ENCODE measurements at regions of chr9 and their contacts with region 1.

Region 1: GRCh38 chr9:73200694-73201452 is 49.2 kb downstream of the ANXA1 start:
- DNase-seq: no peak
- ATAC-seq: peak; percentile 82
- H3K4me3 ChIP-seq: no peak overlapping the region
- H3K27ac ChIP-seq: no peak overlapping the region
- H3K4me1 ChIP-seq: no peaks in the 10 kb centered on the region
- H3K27me3 ChIP-seq: no peaks in the 10 kb centered on the region
- CTCF ChIP-seq: peak in 2 of 3 experiments; percentile 43 to 58; a peak in 3 of 6 replicates
- EP300 ChIP-seq: no peak
- POLR2A ChIP-seq: no peak
- RAD21 ChIP-seq: peak; percentile 66

Region 2: GRCh38 chr9:73116031-73116430 is 84.8 kb before region 1 on chr9:
- CTCF ChIA-PET with region 1: interaction called, 25 read pairs
- POLR2A ChIA-PET with region 1: no interaction called
- RAD21 ChIA-PET with region 1: interaction called, 3 read pairs
- SMC1A ChIA-PET with region 1: interaction called, 3 read pairs
- in situ Hi-C with region 1: no loop called
- intact Hi-C with region 1: no loop called
- DNase-seq: no peak
- ATAC-seq: peak; percentile 48; the same call in 1 of the 3 replicates
- H3K4me3 ChIP-seq: no peak overlapping the region
- H3K27ac ChIP-seq: no peak overlapping the region
- H3K4me1 ChIP-seq: no peaks in the 10 kb centered on the region
- H3K27me3 ChIP-seq: no peaks in the 10 kb centered on the region
- CTCF ChIP-seq: no peak
- EP300 ChIP-seq: no peak
- POLR2A ChIP-seq: no peak
- RAD21 ChIP-seq: no peak

Region 3: GRCh38 chr9:73167614-73168013 is 33.3 kb before region 1 on chr9:
- CTCF ChIA-PET with region 1: no interaction called
- POLR2A ChIA-PET with region 1: no interaction called
- RAD21 ChIA-PET with region 1: no interaction called
- SMC1A ChIA-PET with region 1: no interaction called
- in situ Hi-C with region 1: no loop called
- intact Hi-C with region 1: no loop called
- DNase-seq: no peak
- ATAC-seq: peak; percentile 47; the same call in 2 of the 3 replicates
- H3K4me3 ChIP-seq: no peak overlapping the region
- H3K27ac ChIP-seq: no peak overlapping the region
- H3K4me1 ChIP-seq: no peaks in the 10 kb centered on the region
- H3K27me3 ChIP-seq: no peaks in the 10 kb centered on the region; a peak in 1 of 4 replicates
- CTCF ChIP-seq: no peak
- EP300 ChIP-seq: no peak
- POLR2A ChIP-seq: no peak
- RAD21 ChIP-seq: no peak

Region 4: GRCh38 chr9:73219985-73220626 is 19.2 kb after region 1 on chr9:
- CTCF ChIA-PET with region 1: interaction called, 70 read pairs
- POLR2A ChIA-PET with region 1: interaction called, 3 read pairs
- RAD21 ChIA-PET with region 1: interaction called, 24 read pairs
- SMC1A ChIA-PET with region 1: interaction called, 32 read pairs
- in situ Hi-C with region 1: no loop called
- intact Hi-C with region 1: no loop called
- DNase-seq: peak; percentile 40
- ATAC-seq: peak; percentile 87
- H3K4me3 ChIP-seq: no peak overlapping the region
- H3K27ac ChIP-seq: no peak overlapping the region
- H3K4me1 ChIP-seq: no peaks in the 10 kb centered on the region
- H3K27me3 ChIP-seq: no peaks in the 10 kb centered on the region
- CTCF ChIP-seq: no peak
- EP300 ChIP-seq: no peak
- POLR2A ChIP-seq: no peak
- RAD21 ChIP-seq: no peak

Region 5: GRCh38 chr9:73269430-73270101 is 68.7 kb after region 1 on chr9:
- CTCF ChIA-PET with region 1: interaction called, 28 read pairs
- POLR2A ChIA-PET with region 1: no interaction called
- RAD21 ChIA-PET with region 1: interaction called, 17 read pairs
- SMC1A ChIA-PET with region 1: interaction called, 21 read pairs
- in situ Hi-C with region 1: no loop called
- intact Hi-C with region 1: no loop called
- DNase-seq: no peak
- ATAC-seq: peak; percentile 48
- H3K4me3 ChIP-seq: no peak overlapping the region
- H3K27ac ChIP-seq: no peak overlapping the region
- H3K4me1 ChIP-seq: no peaks in the 10 kb centered on the region
- H3K27me3 ChIP-seq: no peaks in the 10 kb centered on the region
- CTCF ChIP-seq: peak in 2 of 3 experiments; percentile 9 to 35; a peak in 2 of 6 replicates
- EP300 ChIP-seq: no peak
- POLR2A ChIP-seq: no peak
- RAD21 ChIP-seq: peak; percentile 13; the same call in 1 of the 2 replicates

Region 6: GRCh38 chr9:73357607-73358006 is 156.7 kb after region 1 on chr9:
- CTCF ChIA-PET with region 1: no interaction called
- POLR2A ChIA-PET with region 1: no interaction called
- RAD21 ChIA-PET with region 1: no interaction called
- SMC1A ChIA-PET with region 1: no interaction called
- in situ Hi-C with region 1: no loop called
- intact Hi-C with region 1: no loop called
- DNase-seq: no peak
- ATAC-seq: no peak
- H3K4me3 ChIP-seq: no peak overlapping the region
- H3K27ac ChIP-seq: no peak overlapping the region
- H3K4me1 ChIP-seq: no peaks in the 10 kb centered on the region
- H3K27me3 ChIP-seq: no peaks in the 10 kb centered on the region
- CTCF ChIP-seq: no peak
- EP300 ChIP-seq: no peak
- POLR2A ChIP-seq: no peak
- RAD21 ChIP-seq: no peak

Region 7: GRCh38 chr9:73667717-73668116 is 466.8 kb after region 1 on chr9:
- CTCF ChIA-PET with region 1: no interaction called
- POLR2A ChIA-PET with region 1: no interaction called
- RAD21 ChIA-PET with region 1: no interaction called
- SMC1A ChIA-PET with region 1: no interaction called
- in situ Hi-C with region 1: no loop called
- intact Hi-C with region 1: loop called (anchors 5 kb)
- DNase-seq: no peak
- ATAC-seq: peak; percentile 61; the same call in 2 of the 3 replicates
- H3K4me3 ChIP-seq: no peak overlapping the region
- H3K27ac ChIP-seq: no peak overlapping the region
- H3K4me1 ChIP-seq: no peaks in the 10 kb centered on the region
- H3K27me3 ChIP-seq: no peaks in the 10 kb centered on the region
- CTCF ChIP-seq: peak in 2 of 3 experiments; percentile 5 to 21; a peak in 1 of 6 replicates
- EP300 ChIP-seq: no peak
- POLR2A ChIP-seq: no peak
- RAD21 ChIP-seq: no peak

Region 8: DNA sequence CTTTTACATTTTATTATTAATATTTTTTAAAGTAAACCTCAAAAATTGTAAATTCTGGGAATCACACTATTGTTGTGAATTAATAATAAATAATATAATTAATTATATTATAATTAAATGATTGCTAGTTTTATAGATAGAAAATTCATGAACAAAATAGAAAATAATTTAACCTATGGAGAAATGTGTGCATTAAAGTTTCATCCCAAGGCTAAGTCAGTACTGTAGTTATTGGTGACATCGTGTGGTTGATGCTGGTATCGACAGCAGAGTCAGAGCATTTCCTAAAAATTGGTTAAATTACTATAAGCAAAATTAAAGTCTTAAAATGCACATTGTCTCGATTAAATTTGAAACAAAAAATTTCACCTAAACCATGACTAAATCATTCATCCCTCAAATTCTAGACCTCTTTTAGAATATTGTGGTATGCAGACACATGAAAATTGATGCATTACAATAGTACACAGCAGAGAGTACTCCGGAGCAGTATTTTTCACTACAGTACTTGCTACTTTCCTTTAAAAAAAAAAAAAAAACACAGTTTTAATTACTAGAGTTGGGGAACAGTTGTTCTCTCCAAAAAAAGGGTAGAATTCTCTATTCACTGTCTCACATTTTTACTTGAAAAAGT is 1370.1 kb after region 1 on chr9:
- CTCF ChIA-PET with region 1: interaction called, 15 read pairs
- POLR2A ChIA-PET with region 1: no interaction called
- RAD21 ChIA-PET with region 1: interaction called, 3 read pairs
- SMC1A ChIA-PET with region 1: interaction called, 3 read pairs
- in situ Hi-C with region 1: no loop called
- intact Hi-C with region 1: loop called (anchors 10 kb)
- DNase-seq: no peak
- ATAC-seq: peak; percentile 48; the same call in 2 of the 3 replicates
- H3K4me3 ChIP-seq: no peak overlapping the region
- H3K27ac ChIP-seq: no peak overlapping the region
- H3K4me1 ChIP-seq: peaks cover 3% of the 10 kb centered on the region; the same call in 1 of the 2 replicates
- H3K27me3 ChIP-seq: no peaks in the 10 kb centered on the region
- CTCF ChIP-seq: peak; percentile 60 to 79 (median 71)
- EP300 ChIP-seq: no peak
- POLR2A ChIP-seq: no peak
- RAD21 ChIP-seq: peak; percentile 72

Region 9: GRCh38 chr9:74742792-74743730 is 1542.2 kb after region 1 on chr9:
- CTCF ChIA-PET with region 1: interaction called, 3 read pairs
- POLR2A ChIA-PET with region 1: no interaction called
- RAD21 ChIA-PET with region 1: no interaction called
- SMC1A ChIA-PET with region 1: no interaction called
- in situ Hi-C with region 1: no loop called
- intact Hi-C with region 1: loop called (anchors 10 kb)
- DNase-seq: no peak
- ATAC-seq: peak; percentile 59
- H3K4me3 ChIP-seq: no peak overlapping the region
- H3K27ac ChIP-seq: no peak overlapping the region
- H3K4me1 ChIP-seq: no peaks in the 10 kb centered on the region
- H3K27me3 ChIP-seq: peaks cover 0 to 7% of the 10 kb centered on the region in 2 experiments; a peak in 2 of 4 replicates
- CTCF ChIP-seq: peak; percentile 56 to 66 (median 62)
- EP300 ChIP-seq: no peak
- POLR2A ChIP-seq: no peak
- RAD21 ChIP-seq: peak; percentile 54

Measured in GM12878 (cell line).